Astrocyte of the cerebellum (primary cell): ENCODE measurements at regions of chr20 and their contacts with region 1.

Region 1: DNA sequence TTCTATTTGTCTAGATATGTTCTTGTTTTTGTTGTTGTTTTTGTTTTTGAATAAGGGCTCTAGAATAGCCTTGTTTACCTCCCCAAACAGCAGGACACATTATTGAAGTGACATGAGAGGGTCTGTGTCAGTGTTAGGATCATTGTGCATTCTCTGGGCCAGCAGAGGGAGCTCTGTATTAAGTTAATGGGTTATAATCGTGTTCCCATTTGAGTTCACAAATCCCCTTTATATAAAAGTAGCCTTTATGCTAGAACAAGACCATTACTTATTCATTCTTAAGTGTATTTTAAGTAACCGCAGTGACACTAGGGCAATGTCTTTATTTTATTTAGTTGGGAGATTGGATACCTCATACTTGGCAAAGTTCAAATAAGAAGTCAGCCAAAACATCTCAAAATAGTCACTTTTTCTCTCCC is 44.8 kb downstream of the STK4 start:
- DNase-seq: peak; percentile 65
- H3K4me3 ChIP-seq: no peak overlapping the region
- CTCF ChIP-seq: peak; percentile 80

Region 2: GRCh38 chr20:44970243-44970757 is 40.8 kb before region 1 on chr20:
- in situ Hi-C with region 1: no loop called
- DNase-seq: no peak
- H3K4me3 ChIP-seq: no peak overlapping the region
- CTCF ChIP-seq: no peak

Region 3: DNA sequence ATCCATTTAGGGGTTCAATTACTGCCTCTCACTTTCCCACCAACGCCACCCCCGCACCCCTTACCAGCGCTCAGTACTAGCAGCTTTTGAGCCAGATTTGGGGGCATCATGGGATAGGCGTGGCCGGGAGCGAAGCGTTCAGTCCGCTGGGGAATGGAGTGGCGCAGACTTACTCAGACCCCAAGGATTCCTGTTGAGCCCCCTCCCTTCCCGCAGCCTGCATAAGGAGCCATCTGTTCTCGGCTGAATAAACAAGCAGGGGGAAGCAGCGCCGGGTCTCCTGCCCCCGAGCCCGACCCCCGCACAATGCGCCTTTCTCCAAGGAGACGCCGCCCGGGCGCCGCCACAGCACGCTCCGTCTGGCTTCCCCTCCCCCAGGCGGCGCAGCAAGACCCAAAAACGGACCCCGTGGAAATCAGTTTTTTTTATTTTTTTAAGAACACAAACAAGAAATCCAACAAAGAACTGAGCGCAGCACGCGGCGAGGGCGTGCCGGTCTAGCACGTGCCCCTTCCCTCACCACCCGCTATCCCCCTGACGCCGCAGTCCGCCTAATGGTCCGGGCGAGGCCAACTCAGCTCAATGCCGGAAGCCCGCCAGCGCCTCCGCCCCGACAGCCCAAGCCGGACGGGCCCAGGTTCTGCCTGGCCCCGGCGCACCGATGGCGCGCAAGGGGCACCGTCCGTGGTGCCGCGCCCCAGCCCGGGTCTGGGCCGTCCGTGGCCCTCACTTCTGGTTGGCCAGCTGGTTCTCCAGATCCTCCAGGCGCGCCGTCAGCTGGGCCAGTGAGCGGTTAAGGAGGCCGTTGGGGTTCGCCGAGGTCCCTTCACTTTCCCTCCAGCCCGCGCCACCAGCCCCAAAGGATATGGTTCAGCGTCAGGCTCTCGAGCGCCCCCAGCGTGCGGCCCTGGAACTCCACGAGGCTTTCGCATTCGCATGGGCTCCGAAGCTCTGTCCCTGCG is 282.2 kb after region 1 on chr20:
- in situ Hi-C with region 1: loop called (anchors 25 kb)
- DNase-seq: peak; percentile 20
- H3K4me3 ChIP-seq: peak overlapping the region; percentile 45
- CTCF ChIP-seq: peak; percentile 97